H1 (cell line): ENCODE measurements at regions of chr11 and their contacts with region 1.

Region 1: GRCh38 chr11:6353367-6353987 is 33.2 kb upstream of the CAVIN3 start:
- DNase-seq: peak; percentile 78 to 90
- H3K4me3 ChIP-seq: no peak overlapping the region
- H3K27ac ChIP-seq: no peak overlapping the region
- H3K4me1 ChIP-seq: no peaks in the 10 kb centered on the region
- H3K27me3 ChIP-seq: no peaks in the 10 kb centered on the region
- CTCF ChIP-seq: peak; percentile 77 to 98 (median 97)
- EP300 ChIP-seq: no peak; a peak in 1 of 3 replicates
- POLR2A ChIP-seq: no peak
- RAD21 ChIP-seq: peak; percentile 100

Region 2: DNA sequence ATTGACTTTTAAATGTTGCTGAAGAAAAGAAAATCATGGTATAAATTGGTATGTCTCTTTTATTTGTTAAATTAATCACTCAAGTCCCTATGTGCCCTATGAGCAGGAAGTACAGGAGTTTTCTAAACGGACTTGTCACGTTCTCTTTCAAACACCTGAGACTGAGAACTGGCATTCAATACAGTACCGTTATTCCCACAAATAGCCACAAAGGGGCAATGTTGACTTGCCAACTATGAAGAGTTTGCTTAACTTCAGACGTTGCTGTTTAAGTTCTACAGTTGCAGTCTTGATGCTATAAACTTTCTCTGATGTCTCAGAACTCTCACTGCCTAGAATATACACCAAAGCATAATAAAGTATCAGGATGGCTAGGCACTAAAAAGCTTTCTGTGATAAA is 330.5 kb before region 1 on chr11:
- CTCF ChIA-PET with region 1: interaction called, 25 read pairs
- POLR2A ChIA-PET with region 1: no interaction called
- DNase-seq: no peak
- H3K4me3 ChIP-seq: no peak overlapping the region
- H3K27ac ChIP-seq: no peak overlapping the region
- H3K4me1 ChIP-seq: no peaks in the 10 kb centered on the region
- H3K27me3 ChIP-seq: no peaks in the 10 kb centered on the region
- CTCF ChIP-seq: peak in 2 of 3 experiments; percentile 70 to 81; a peak in 3 of 4 replicates
- EP300 ChIP-seq: no peak
- POLR2A ChIP-seq: no peak
- RAD21 ChIP-seq: peak; percentile 95 to 97

Region 3: GRCh38 chr11:6251120-6251733 is 102.2 kb before region 1 on chr11:
- CTCF ChIA-PET with region 1: interaction called, 120 read pairs
- POLR2A ChIA-PET with region 1: no interaction called
- DNase-seq: peak; percentile 64 to 90
- H3K4me3 ChIP-seq: no peak overlapping the region
- H3K27ac ChIP-seq: no peak overlapping the region
- H3K4me1 ChIP-seq: no peaks in the 10 kb centered on the region
- H3K27me3 ChIP-seq: peaks cover 0 to 3% (median under 1%) of the 10 kb centered on the region in 4 experiments; a peak in 1 of 7 replicates
- CTCF ChIP-seq: peak; percentile 91 to 99 (median 97)
- EP300 ChIP-seq: no peak
- POLR2A ChIP-seq: no peak
- RAD21 ChIP-seq: peak; percentile 84 to 86

Region 4: GRCh38 chr11:6269994-6270393 is 83.5 kb before region 1 on chr11:
- CTCF ChIA-PET with region 1: interaction called, 14 read pairs
- POLR2A ChIA-PET with region 1: no interaction called
- DNase-seq: peak in 1 of 2 experiments; percentile 69
- H3K4me3 ChIP-seq: no peak overlapping the region
- H3K27ac ChIP-seq: no peak overlapping the region
- H3K4me1 ChIP-seq: peaks cover 0 to 4% (median 0%) of the 10 kb centered on the region in 4 experiments; a peak in 1 of 7 replicates
- H3K27me3 ChIP-seq: peaks cover 0 to 2% (median 0%) of the 10 kb centered on the region in 4 experiments; a peak in 1 of 7 replicates
- CTCF ChIP-seq: peak; percentile 63 to 88 (median 69)
- EP300 ChIP-seq: no peak
- POLR2A ChIP-seq: no peak
- RAD21 ChIP-seq: peak; percentile 50 to 63

Region 5: GRCh38 chr11:6307876-6308275 is 45.6 kb before region 1 on chr11:
- CTCF ChIA-PET with region 1: interaction called, 145 read pairs
- POLR2A ChIA-PET with region 1: interaction called, 3 read pairs
- DNase-seq: no peak
- H3K4me3 ChIP-seq: no peak overlapping the region
- H3K27ac ChIP-seq: no peak overlapping the region
- H3K4me1 ChIP-seq: peaks cover 0 to 7% (median 4%) of the 10 kb centered on the region in 4 experiments; a peak in 2 of 7 replicates
- H3K27me3 ChIP-seq: no peaks in the 10 kb centered on the region
- CTCF ChIP-seq: no peak
- EP300 ChIP-seq: no peak
- POLR2A ChIP-seq: no peak
- RAD21 ChIP-seq: no peak

Region 6: GRCh38 chr11:6321961-6322362 is 31.5 kb before region 1 on chr11:
- CTCF ChIA-PET with region 1: interaction called, 145 read pairs
- POLR2A ChIA-PET with region 1: interaction called, 10 read pairs
- DNase-seq: no peak
- H3K4me3 ChIP-seq: no peak overlapping the region
- H3K27ac ChIP-seq: no peak overlapping the region
- H3K4me1 ChIP-seq: peaks cover 12 to 47% (median 32%) of the 10 kb centered on the region in 4 experiments
- H3K27me3 ChIP-seq: peaks cover 0 to 3% (median 1%) of the 10 kb centered on the region in 4 experiments; a peak in 1 of 7 replicates
- CTCF ChIP-seq: no peak
- EP300 ChIP-seq: no peak
- POLR2A ChIP-seq: no peak
- RAD21 ChIP-seq: no peak

Region 7: DNA sequence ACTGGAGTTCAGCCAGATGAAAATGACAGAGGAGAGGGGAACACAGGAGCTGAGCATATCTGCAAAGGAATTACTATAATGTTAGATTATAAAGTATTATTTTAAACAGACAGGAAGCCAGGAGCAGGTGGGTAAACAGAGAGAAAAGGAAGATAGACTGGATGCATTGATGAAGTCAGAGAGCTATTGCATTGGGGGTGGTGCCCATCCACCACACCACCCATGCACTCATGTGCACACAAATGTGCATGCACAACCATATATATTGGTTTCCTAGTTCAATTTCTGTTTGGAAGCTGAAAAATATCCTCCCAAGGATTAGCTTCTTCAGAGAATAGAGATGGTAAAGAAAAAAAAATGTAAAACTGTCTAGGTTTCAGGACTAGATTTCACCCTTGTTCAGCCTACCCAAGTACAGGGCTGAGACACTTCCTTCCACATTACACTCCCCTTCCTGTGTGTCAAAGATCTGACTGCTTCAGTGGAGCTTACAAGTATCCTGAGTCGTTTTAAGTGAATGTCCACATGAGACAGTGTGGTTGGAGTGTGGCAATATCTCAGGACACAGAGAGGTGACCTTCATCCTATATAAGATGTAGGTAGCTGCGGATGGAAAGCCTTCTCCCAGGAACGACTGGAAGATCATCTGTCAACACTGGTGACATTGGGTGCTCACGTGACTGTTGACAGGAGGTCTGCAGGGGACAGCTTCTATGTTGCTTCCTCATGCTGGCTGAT is 24.6 kb after region 1 on chr11:
- CTCF ChIA-PET with region 1: interaction called, 33 read pairs
- POLR2A ChIA-PET with region 1: no interaction called
- DNase-seq: no peak
- H3K4me3 ChIP-seq: no peak overlapping the region
- H3K27ac ChIP-seq: no peak overlapping the region
- H3K4me1 ChIP-seq: peaks cover 0 to 9% (median 7%) of the 10 kb centered on the region in 4 experiments; a peak in 4 of 7 replicates
- H3K27me3 ChIP-seq: no peaks in the 10 kb centered on the region
- CTCF ChIP-seq: no peak
- EP300 ChIP-seq: no peak
- POLR2A ChIP-seq: no peak
- RAD21 ChIP-seq: no peak